ENCODE measurements at regions of chr11 and their contacts with region 1.

Region 1: GRCh38 chr11:14414470-14415461 is 55.8 kb upstream of the RRAS2 start:
- DNase-seq: no peak
- ATAC-seq: no peak
- H3K4me3 ChIP-seq: no peak overlapping the region
- H3K27ac ChIP-seq: peak overlapping the region in 2 of 12 donors; percentile 1 to 10
- H3K4me1 ChIP-seq: peaks cover 0 to 33% (median 7%) of the 10 kb centered on the region in 12 donors
- H3K27me3 ChIP-seq: no peaks in the 10 kb centered on the region
- CTCF ChIP-seq: no peak
- POLR2A ChIP-seq: no peak

Region 2: DNA sequence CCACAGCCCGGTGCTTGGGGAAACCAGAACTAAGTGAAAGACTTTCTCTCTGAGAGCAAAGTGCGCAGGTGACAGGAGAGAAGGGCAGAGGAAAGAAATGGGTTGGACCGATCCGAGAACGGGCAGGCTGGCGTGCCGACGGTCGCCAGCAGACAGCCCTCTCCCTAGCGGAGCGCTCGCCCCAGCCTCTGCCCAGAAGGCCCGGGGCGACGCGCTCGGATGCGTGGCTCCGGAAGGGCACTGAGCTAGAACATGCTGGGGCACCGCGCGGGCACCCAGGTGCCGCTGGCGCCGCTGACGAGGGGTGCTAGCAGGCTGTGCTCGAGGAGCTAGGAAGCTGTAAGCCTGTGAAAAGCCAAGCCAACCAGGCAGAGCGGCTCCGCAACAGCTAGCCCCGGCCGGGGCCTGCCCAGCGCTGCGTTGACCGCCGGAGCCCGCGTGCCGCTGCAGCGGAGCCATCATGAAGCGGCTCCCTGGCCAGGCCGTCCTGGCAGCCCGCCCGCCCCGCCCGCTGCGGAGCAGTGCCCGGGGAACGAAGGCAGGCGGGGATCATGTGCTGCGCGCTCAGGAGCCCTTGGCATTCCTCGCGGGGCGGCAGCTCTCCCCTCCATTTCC is 33.7 kb before region 1 on chr11:
- intact Hi-C with region 1: loop called in 1 of 10 experiments (anchors 5 kb)
- DNase-seq: peak; percentile 74 to 86 (median 79)
- ATAC-seq: peak; percentile 86 to 97 (median 94)
- H3K4me3 ChIP-seq: peak overlapping the region; percentile 15 to 67 (median 54)
- H3K27ac ChIP-seq: peak overlapping the region; percentile 42 to 94 (median 86)
- H3K4me1 ChIP-seq: peaks cover 0 to 25% (median 8%) of the 10 kb centered on the region in 12 donors
- H3K27me3 ChIP-seq: peaks cover 0 to 23% (median 0%) of the 10 kb centered on the region in 9 donors
- CTCF ChIP-seq: peak in 2 of 12 donors; percentile 10 to 20
- POLR2A ChIP-seq: no peak

Measured in heart left ventricle (tissue), 16 donors.